ENCODE measurements at regions of chr3 and their contacts with region 1.

Region 1: GRCh38 chr3:165339753-165340152 is 143.6 kb upstream of the SLITRK3 start:
- DNase-seq: no peak
- H3K4me3 ChIP-seq: no peak overlapping the region
- H3K27ac ChIP-seq: no peak overlapping the region
- H3K4me1 ChIP-seq: no peaks in the 10 kb centered on the region
- H3K27me3 ChIP-seq: no peaks in the 10 kb centered on the region
- CTCF ChIP-seq: peak in 1 of 5 experiments; percentile 22
- EP300 ChIP-seq: no peak
- POLR2A ChIP-seq: no peak

Region 2: DNA sequence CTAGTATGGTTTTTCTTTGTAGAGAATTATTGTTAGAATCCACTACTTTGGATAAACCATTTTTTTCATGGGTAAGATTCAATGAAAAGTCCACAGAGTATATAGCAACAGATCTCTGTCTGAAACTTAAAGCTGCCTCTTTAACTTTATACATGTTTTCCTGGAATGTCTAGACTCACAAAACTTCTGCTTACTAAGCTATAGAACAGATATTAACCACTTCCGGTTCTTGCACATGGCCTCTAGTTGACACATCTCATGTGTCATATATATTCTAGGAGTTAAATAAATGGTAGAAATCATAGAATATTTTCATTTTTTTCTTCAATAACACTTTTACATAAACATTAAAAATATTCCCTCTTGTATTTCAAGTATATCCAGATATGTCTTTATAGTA is 1955.4 kb before region 1 on chr3:
- in situ Hi-C with region 1: no loop called
- intact Hi-C with region 1: loop called (anchors 5 kb)
- DNase-seq: no peak
- H3K4me3 ChIP-seq: no peak overlapping the region
- H3K27ac ChIP-seq: no peak overlapping the region
- H3K4me1 ChIP-seq: no peaks in the 10 kb centered on the region
- H3K27me3 ChIP-seq: no peaks in the 10 kb centered on the region
- CTCF ChIP-seq: no peak
- EP300 ChIP-seq: no peak
- POLR2A ChIP-seq: no peak

Region 3: GRCh38 chr3:165148876-165149441 is 190.8 kb before region 1 on chr3:
- in situ Hi-C with region 1: no loop called
- intact Hi-C with region 1: no loop called
- DNase-seq: no peak
- H3K4me3 ChIP-seq: no peak overlapping the region
- H3K27ac ChIP-seq: peak overlapping the region; percentile 41 to 78 (median 64)
- H3K4me1 ChIP-seq: peaks cover 0 to 27% (median 13%) of the 10 kb centered on the region in 4 donors
- H3K27me3 ChIP-seq: no peaks in the 10 kb centered on the region
- CTCF ChIP-seq: no peak
- EP300 ChIP-seq: no peak
- POLR2A ChIP-seq: no peak

Region 4: GRCh38 chr3:165696496-165696895 is 356.7 kb after region 1 on chr3:
- in situ Hi-C with region 1: no loop called
- intact Hi-C with region 1: no loop called
- DNase-seq: no peak
- H3K4me3 ChIP-seq: no peak overlapping the region
- H3K27ac ChIP-seq: no peak overlapping the region
- H3K4me1 ChIP-seq: no peaks in the 10 kb centered on the region
- H3K27me3 ChIP-seq: no peaks in the 10 kb centered on the region
- CTCF ChIP-seq: no peak
- EP300 ChIP-seq: no peak
- POLR2A ChIP-seq: no peak